ENCODE measurements at regions of chrX and their contacts with region 1.

Region 1: GRCh38 chrX:48465336-48465933 is 4.6 kb downstream of the SLC38A5 start:
- DNase-seq: no peak
- H3K4me3 ChIP-seq: no peak overlapping the region
- H3K27ac ChIP-seq: no peak overlapping the region
- H3K4me1 ChIP-seq: peaks cover 0 to 22% (median 4%) of the 10 kb centered on the region in 4 donors
- H3K27me3 ChIP-seq: no peaks in the 10 kb centered on the region
- CTCF ChIP-seq: no peak
- EP300 ChIP-seq: no peak
- POLR2A ChIP-seq: no peak

Region 2: DNA sequence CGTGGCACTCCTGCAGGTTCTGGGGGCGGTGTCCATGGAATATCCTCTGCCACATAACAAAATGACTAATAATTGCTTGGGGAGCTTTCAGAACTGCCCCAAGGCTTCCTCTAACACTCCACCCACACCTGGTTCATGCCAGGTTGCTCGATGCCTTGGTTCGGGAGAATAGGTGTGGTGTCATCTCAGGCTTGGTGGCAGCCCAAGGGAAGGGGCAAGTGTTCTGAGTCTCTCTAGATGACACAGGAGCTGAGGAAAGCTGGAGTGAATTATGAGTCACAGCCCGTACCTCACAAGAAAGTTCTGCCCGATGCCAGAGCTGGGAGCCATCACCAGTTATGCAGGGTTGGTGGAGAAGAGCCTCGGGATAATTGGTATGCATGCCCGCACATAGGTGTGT is 25.2 kb after region 1 on chrX:
- in situ Hi-C with region 1: no loop called
- intact Hi-C with region 1: loop called (anchors 2 kb)
- DNase-seq: no peak
- H3K4me3 ChIP-seq: no peak overlapping the region
- H3K27ac ChIP-seq: no peak overlapping the region
- H3K4me1 ChIP-seq: no peaks in the 10 kb centered on the region
- H3K27me3 ChIP-seq: no peaks in the 10 kb centered on the region
- CTCF ChIP-seq: no peak
- EP300 ChIP-seq: no peak
- POLR2A ChIP-seq: no peak

Measured in transverse colon (tissue), 4 donors.